Dorsolateral prefrontal cortex (tissue), 120 donors: ENCODE measurements at regions of chr22 and their contacts with region 1.

Region 1: GRCh38 chr22:17501679-17502285 is 61.5 kb upstream of the SLC25A18 start:
- DNase-seq: peak in 1 of 10 donors; percentile 40
- H3K4me3 ChIP-seq: no peak overlapping the region
- H3K27ac ChIP-seq: no peak overlapping the region
- H3K27me3 ChIP-seq: peaks cover 0 to 3% (median 0%) of the 10 kb centered on the region in 45 donors
- CTCF ChIP-seq: peak; percentile 59 to 92 (median 79)

Region 2: GRCh38 chr22:16932577-16932976 is 569.2 kb before region 1 on chr22:
- intact Hi-C with region 1: loop called in 1 of 2 experiments (anchors 10 kb)
- DNase-seq: peak in 2 of 10 donors; percentile 13 to 52
- H3K4me3 ChIP-seq: no peak overlapping the region
- H3K27ac ChIP-seq: no peak overlapping the region
- H3K27me3 ChIP-seq: peaks cover 0 to 52% (median 8%) of the 10 kb centered on the region in 45 donors
- CTCF ChIP-seq: peak in 50 of 56 donors; percentile 12 to 71 (median 42)

Region 3: GRCh38 chr22:17077255-17077654 is 424.5 kb before region 1 on chr22:
- intact Hi-C with region 1: loop called (anchors 5 kb)
- DNase-seq: no peak
- H3K4me3 ChIP-seq: no peak overlapping the region
- H3K27ac ChIP-seq: no peak overlapping the region
- H3K27me3 ChIP-seq: peaks cover 0 to 5% (median 0%) of the 10 kb centered on the region in 45 donors
- CTCF ChIP-seq: no peak

Region 4: DNA sequence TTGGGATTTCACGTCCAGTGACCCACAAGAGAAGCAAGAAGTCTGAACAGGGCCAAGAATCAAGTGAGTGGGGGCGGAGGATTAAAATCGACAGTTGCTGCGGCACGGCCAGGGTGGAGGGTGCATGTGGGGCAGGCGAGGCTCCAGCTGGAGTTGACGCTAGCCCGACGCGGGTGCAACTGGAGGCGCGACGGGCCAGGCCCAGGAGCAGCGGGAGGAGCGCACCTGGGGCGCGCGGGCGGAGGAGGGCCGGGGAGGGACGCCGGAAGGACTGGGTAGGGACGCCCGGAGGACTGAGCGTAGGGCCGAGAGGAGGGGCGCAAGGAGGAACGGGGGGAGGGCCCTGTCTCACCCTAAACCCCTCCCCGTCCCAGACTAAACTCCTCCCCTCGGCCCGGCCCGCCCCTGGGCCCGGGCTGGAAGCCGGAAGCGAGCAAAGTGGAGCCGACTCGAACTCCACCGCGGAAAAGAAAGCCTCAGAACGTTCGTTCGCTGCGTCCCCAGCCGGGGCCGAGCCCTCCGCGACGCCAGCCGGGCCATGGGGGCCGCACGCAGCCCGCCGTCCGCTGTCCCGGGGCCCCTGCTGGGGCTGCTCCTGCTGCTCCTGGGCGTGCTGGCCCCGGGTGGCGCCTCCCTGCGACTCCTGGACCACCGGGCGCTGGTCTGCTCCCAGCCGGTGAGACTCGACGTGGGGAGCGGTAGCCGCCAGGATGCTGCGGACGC is 417.1 kb before region 1 on chr22 and contains the start of gene IL17RA:
- intact Hi-C with region 1: loop called in 1 of 2 experiments (anchors 5 kb)
- DNase-seq: peak in 9 of 10 donors; percentile 29 to 82 (median 58)
- H3K4me3 ChIP-seq: peak within 1 kb of the TSS; percentile 51 to 86 (median 71)
- H3K27ac ChIP-seq: peak within 1 kb of the TSS in 47 of 59 donors; percentile 24 to 91 (median 67)
- H3K27me3 ChIP-seq: peaks cover 0 to 24% (median 4%) of the 10 kb centered on the region in 45 donors
- CTCF ChIP-seq: peak in 4 of 56 donors; percentile 9 to 43 (median 24)
- total RNA-seq, gene IL17RA: 5.6 to 23.7 (median 11.0) TPM

Region 5: DNA sequence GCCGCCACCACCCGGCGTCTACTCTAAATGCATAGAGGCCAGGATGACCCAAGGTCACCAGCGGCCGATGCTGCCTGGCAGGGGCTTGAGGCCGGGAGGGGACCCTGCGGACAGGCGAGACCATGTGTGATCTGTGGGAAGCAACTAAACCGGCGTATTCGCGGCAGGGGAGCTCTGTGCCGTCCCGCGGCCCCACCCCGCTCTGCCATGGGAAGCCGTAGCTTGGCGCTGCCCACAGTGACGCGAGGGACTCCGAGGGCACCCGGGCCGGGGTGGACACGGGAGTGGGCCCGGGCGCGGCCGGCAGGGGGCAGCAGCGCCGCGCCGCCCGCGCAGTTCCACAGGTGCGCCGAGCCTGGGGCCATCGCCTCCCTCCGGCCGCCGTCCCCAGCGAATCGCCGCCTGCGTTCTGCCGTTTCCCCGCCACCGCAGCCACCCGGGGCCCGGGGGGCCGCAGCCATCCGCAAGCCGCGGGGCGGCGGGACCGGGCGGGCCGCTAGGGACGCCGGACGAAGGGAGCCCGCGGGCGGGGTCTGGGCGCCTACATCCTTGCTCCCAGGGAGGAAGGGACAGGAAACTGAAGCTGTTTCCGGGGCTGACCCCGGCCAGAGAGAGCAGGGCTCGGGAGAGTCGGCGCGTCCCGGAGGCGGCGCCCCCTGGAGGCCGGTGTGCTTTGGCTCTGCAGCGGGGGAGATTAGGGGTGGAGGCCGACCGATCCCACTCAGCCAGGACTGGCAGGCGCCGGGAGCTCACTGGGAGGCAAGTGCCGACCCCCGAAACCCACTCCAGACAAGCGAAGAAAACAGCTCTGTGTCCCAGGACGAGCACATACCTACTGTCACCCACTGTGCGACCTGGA is 330.2 kb before region 1 on chr22:
- intact Hi-C with region 1: loop called (anchors 1 to 5 kb)
- DNase-seq: peak; percentile 77 to 90 (median 84)
- H3K4me3 ChIP-seq: peak overlapping the region; percentile 39 to 84 (median 71)
- H3K27ac ChIP-seq: peak overlapping the region; percentile 83 to 99 (median 95)
- H3K27me3 ChIP-seq: no peaks in the 10 kb centered on the region
- CTCF ChIP-seq: peak; percentile 48 to 99 (median 76)

Region 6: DNA sequence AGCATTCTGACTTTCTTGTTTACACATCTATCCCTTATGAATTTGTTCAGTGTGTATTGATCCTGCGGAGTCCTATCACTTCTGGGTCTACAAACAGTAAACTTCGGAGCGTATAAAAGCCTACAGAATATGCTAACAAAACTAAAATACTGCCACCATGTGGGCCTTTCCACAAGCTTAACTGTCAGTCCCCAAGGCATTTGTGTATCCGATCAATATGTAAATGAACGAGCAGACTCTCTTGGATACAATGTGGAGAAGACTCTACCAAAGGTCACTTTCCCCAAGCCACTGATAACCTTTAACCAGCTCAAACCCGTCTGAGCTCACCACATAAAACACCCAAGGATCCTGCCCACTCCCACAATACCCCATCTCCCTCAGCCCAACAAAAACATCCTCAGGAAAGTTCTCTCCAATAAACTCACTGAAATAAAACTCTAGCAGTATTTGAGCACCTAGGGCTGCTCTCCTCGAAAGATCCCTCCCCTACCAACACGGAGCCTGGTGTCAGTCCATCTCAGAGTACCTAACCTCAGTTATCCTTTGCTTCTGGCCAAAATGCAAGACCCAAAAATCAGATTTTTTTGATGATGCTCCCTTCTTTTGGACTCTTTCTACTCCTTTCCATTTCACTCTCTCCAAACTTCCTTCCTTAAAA is 300.4 kb before region 1 on chr22:
- intact Hi-C with region 1: loop called in 1 of 2 experiments (anchors 10 kb)
- DNase-seq: no peak
- H3K4me3 ChIP-seq: no peak overlapping the region
- H3K27ac ChIP-seq: no peak overlapping the region
- H3K27me3 ChIP-seq: peaks cover 0 to 10% (median 0%) of the 10 kb centered on the region in 45 donors
- CTCF ChIP-seq: peak in 41 of 56 donors; percentile 5 to 55 (median 34)

Region 7: DNA sequence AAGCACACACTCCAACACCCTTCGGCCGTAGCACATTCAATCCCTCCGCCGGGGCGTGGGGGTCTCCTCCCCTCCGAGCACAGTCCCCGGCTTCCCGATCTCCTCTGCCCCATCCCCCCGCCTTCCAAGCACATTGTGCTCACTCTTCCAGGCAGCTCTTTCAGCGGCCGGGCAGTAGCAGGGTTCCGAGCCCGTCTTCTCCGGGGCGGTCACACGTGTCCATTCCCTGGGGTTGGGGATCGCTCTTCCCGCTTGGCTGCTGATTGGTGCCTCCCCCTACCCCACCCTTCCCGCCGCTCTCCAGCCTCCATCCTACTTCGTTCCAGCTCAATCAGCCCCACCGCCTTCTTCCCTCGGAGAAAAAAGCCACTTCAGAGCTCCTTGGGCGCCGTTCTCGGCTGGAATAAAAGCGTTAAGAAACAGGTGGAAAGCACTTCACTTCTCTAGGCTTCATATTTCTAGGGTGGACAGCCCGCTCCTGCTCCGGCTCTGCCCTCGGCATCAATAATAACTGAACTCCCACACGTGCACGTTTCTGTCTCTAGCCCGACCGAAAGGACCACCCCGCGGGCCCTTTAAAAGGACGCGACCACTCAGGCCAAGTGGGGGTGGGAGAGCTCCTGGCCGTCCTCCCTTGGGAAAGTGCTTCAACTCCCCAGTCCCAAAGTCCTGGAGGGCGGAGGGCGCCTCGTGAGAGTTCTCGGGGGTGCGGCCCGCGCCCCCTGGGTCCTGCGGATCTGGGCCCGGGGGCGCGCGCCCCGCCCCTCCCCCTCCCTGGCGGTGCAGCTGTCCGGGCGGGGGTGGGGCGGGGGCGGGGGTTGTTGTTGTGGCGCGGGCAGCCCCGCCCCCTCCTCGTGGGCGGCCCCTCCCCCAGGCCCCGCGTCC is 133.0 kb before region 1 on chr22:
- intact Hi-C with region 1: loop called (anchors 1 to 2 kb)
- DNase-seq: peak; percentile 41 to 67 (median 54)
- H3K4me3 ChIP-seq: peak overlapping the region; percentile 34 to 84 (median 68)
- H3K27ac ChIP-seq: peak overlapping the region; percentile 13 to 95 (median 89)
- H3K27me3 ChIP-seq: peaks cover 0 to 66% (median 18%) of the 10 kb centered on the region in 45 donors
- CTCF ChIP-seq: peak in 5 of 56 donors; percentile 5 to 19 (median 7)